PC-3 (cell line): ENCODE measurements at regions of chr9 and their contacts with region 1.

Region 1: DNA sequence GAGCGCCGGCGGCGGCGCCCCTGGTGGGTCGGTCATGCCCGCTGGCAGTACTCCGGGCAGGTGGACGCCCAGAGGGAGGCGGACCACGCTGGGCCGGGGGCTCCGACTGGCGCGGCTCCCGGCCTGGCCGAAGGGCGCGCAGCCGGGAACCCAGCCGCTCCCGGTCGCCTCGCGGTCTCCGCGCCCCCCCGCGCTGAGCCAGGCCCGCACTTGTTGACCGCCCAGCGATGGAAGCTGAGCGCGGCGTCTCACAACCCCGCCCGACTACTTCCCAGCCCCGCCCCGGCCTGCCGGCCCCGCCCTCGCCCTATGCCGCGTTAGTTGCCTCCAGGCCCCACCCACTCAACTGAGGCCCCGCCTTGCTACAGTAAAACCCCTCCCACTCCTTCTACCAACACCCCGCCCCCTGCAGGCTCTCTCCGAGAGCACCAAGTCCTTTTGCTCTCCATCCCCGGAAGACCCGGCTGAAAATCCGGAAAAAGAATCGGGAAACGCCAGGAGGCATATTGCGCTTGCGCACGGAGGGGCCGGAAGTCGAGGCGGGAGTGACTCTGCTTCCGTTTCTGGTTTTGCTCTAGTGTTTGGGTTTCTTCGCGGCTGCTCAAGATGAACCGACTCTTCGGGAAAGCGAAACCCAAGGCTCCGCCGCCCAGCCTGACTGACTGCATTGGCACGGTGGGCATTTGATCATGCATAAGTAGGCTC is at the starts of genes BAG1 and CHMP5:
- DNase-seq: peak; percentile 98
- ATAC-seq: peak; percentile 91
- H3K4me3 ChIP-seq: peak within 1 kb of the TSS; percentile 91
- H3K27ac ChIP-seq: peak within 1 kb of the TSS; percentile 77
- H3K4me1 ChIP-seq: peaks cover 19% of the 10 kb centered on the region
- H3K27me3 ChIP-seq: no peaks in the 10 kb centered on the region
- CTCF ChIP-seq: no peak
- total RNA-seq, gene BAG1: 103 and 132 TPM in 2 replicates
- total RNA-seq, gene CHMP5: 64.2 and 65.0 TPM in 2 replicates

Region 2: GRCh38 chr9:32723789-32724325 is 540.8 kb before region 1 on chr9:
- CTCF ChIA-PET with region 1: no interaction called
- POLR2A ChIA-PET with region 1: no interaction called
- intact Hi-C with region 1: no loop called
- DNase-seq: no peak
- ATAC-seq: no peak
- H3K4me3 ChIP-seq: no peak overlapping the region
- H3K27ac ChIP-seq: no peak overlapping the region
- H3K4me1 ChIP-seq: no peaks in the 10 kb centered on the region
- H3K27me3 ChIP-seq: peaks cover 47% of the 10 kb centered on the region
- CTCF ChIP-seq: no peak

Region 3: GRCh38 chr9:33233681-33234473 is 30.7 kb before region 1 on chr9:
- CTCF ChIA-PET with region 1: no interaction called
- POLR2A ChIA-PET with region 1: interaction called, 3 read pairs
- intact Hi-C with region 1: loop called (anchors 2 kb)
- DNase-seq: peak; percentile 97
- ATAC-seq: peak; percentile 81
- H3K4me3 ChIP-seq: no peak overlapping the region
- H3K27ac ChIP-seq: peak overlapping the region; percentile 98
- H3K4me1 ChIP-seq: peaks cover 52% of the 10 kb centered on the region
- H3K27me3 ChIP-seq: no peaks in the 10 kb centered on the region
- CTCF ChIP-seq: no peak